ENCODE measurements at regions of chr2 and their contacts with region 1.

Region 1: DNA sequence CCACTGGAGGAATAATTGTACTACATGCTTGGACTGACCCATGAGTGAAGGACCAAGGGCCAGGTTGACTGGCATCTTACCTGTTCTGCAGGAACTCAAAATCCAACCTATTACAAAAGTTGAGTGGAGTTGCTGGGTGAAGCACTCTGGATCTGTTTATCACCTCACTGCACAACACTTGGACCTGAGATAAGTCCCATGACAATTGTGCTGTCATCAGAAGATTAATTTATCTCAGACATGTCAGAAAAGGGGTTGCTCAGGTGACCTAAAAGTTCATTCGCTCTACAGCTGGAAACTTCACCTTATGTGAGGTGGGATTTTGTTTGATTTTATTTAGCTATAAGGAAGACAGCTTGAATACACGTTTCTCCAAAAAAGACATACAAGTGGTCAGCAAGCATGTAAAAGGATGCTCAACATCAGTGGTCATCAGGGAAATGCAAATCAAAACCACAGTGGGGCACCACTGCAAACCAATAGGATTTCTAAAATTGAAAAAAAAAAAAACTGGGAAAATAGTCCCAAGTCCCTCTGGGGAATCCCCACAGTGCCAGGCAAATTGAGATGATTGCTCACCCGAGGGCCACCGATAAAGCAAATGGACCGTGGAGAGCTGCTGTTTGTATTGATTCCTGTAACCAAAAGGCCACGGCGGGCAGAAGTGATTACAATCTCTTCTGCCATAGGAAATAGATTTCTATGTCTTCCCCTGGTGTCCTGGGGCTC is 65.8 kb upstream of the SLC35F5 start:
- DNase-seq: no peak
- H3K4me3 ChIP-seq: no peak overlapping the region
- CTCF ChIP-seq: no peak

Region 2: GRCh38 chr2:113876503-113877387 is 54.5 kb after region 1 on chr2:
- in situ Hi-C with region 1: loop called (anchors 5 kb)
- DNase-seq: peak; percentile 53
- H3K4me3 ChIP-seq: no peak overlapping the region
- CTCF ChIP-seq: no peak

Measured in astrocyte of the cerebellum (primary cell).